Activated CD8-positive, alpha-beta memory T cell treated with anti-CD3 and anti-CD28 coated beads, Interleukin-2, amount 10 ng/mL, durations not matched to agents 7 days and 5 days (primary cell): ENCODE measurements at regions of chr3 and their contacts with region 1.

Region 1: GRCh38 chr3:47989981-47990440 is 26.2 kb downstream of the MAP4 start:
- DNase-seq: peak; percentile 82
- ATAC-seq: peak; percentile 99
- H3K4me3 Mint-ChIP-seq: no peak overlapping the region
- H3K27ac Mint-ChIP-seq: peak overlapping the region; percentile 52
- H3K4me1 Mint-ChIP-seq: peaks cover 8% of the 10 kb centered on the region
- H3K27me3 Mint-ChIP-seq: no peaks in the 10 kb centered on the region

Region 2: DNA sequence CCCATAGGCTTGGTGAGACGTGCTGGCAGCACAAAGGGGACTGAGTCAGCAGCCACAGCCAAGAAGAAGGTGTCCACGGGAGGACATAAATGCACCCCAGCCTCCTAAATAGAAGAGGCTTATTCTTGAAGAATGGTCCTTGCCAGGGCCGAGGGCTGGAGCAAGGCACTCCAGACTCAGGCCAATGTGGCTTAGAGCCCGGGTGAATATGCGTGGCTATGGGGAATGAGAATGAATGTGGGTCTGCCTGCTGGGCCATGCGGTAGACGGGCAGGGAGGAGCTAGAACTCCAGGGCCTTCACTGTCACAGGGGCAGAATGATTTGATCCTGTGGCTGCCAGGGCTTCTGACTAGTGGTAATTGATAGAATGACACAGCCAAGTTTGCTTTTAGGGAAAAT is 153.0 kb before region 1 on chr3:
- CTCF ChIA-PET with region 1: interaction called, 37 read pairs
- DNase-seq: no peak
- ATAC-seq: no peak
- H3K4me3 Mint-ChIP-seq: no peak overlapping the region
- H3K27ac Mint-ChIP-seq: no peak overlapping the region
- H3K4me1 Mint-ChIP-seq: no peaks in the 10 kb centered on the region
- H3K27me3 Mint-ChIP-seq: no peaks in the 10 kb centered on the region

Region 3: GRCh38 chr3:47976135-47976732 is 13.8 kb before region 1 on chr3:
- CTCF ChIA-PET with region 1: interaction called, 21 read pairs
- DNase-seq: no peak
- ATAC-seq: no peak
- H3K4me3 Mint-ChIP-seq: no peak overlapping the region
- H3K27ac Mint-ChIP-seq: no peak overlapping the region
- H3K4me1 Mint-ChIP-seq: no peaks in the 10 kb centered on the region
- H3K27me3 Mint-ChIP-seq: no peaks in the 10 kb centered on the region

Region 4: DNA sequence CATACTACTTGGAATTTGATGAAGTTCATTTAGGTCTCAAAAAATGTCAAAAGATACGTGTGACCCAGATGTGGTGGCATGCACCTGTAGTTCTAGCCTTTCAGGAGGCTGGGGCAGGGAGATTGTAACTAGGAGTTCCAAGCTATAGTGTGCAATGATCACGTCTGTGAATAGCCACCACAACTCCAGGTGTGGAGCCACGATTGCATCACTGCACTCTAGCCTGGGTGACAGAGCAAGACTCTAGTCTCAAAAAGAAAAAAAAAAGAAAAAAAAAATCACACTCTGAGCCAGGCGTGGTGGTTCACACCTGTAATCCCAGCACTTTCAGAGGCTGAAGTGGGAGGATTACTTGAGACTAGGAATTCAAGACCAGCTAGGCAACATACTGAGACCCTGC is 12.0 kb after region 1 on chr3:
- CTCF ChIA-PET with region 1: interaction called, 10 read pairs
- DNase-seq: no peak
- ATAC-seq: no peak
- H3K4me3 Mint-ChIP-seq: no peak overlapping the region
- H3K27ac Mint-ChIP-seq: no peak overlapping the region
- H3K4me1 Mint-ChIP-seq: no peaks in the 10 kb centered on the region
- H3K27me3 Mint-ChIP-seq: no peaks in the 10 kb centered on the region

Region 5: DNA sequence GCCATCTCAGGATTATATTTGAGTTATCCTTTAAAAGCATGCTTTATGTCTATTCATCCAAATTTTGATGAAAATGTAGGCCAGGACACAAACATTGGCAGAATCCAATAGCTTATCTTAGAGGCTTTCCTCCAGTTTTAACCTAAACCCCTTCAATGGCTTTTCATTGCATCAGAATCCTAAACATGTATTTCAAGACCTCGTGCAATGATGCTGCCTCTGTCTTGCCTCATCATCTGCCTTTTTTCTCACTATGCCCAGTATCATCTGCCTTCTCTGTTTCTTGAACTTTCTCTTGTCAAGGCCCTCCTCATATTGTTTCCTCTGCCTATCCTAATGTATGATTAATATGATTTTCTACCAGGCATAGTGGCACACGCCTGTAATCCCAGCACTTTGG is 102.3 kb after region 1 on chr3:
- CTCF ChIA-PET with region 1: no interaction called
- DNase-seq: no peak
- ATAC-seq: no peak
- H3K4me3 Mint-ChIP-seq: no peak overlapping the region
- H3K27ac Mint-ChIP-seq: no peak overlapping the region
- H3K4me1 Mint-ChIP-seq: peaks cover 11% of the 10 kb centered on the region
- H3K27me3 Mint-ChIP-seq: no peaks in the 10 kb centered on the region

Region 6: DNA sequence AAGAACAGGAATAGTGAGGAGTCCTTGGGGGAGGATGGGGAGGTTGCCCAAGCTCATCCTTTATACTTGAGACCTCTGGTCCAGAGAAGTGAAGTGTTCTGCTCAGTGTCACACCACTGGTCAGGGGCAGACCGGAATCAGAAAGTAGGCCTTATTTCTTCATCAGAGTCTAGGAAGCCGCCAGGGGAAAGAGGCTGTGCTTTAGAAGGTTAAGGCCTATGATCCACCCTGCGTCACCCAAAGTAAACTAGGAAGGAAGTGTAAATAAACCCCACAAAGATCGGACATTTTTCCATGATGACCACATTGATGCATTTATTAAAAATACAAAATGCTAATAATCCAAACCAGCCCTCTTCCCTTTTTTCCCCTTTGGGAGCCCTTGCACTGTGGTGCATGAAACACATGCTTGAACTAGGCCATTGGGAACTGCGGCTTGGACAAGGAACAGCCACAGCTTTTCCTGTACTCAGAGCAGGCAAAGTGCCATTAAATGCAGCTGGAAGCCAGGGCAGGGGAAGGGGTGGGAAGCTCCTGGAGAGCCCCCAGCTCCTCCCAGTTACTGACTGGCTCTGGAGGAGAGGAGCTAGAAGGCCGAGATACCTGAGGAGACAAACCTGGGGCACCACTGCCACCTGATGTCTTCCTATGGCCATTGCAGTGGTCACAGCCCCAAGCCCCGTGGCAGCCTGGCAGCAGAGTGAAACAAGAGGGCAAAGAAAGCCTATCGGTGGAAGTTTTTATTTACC is 161.2 kb after region 1 on chr3:
- CTCF ChIA-PET with region 1: interaction called, 25 read pairs
- DNase-seq: peak; percentile 82
- ATAC-seq: peak; percentile 99
- H3K4me3 Mint-ChIP-seq: no peak overlapping the region
- H3K27ac Mint-ChIP-seq: peak overlapping the region; percentile 3
- H3K4me1 Mint-ChIP-seq: peaks cover 2% of the 10 kb centered on the region
- H3K27me3 Mint-ChIP-seq: peaks cover 3% of the 10 kb centered on the region